Activated B cell treated with CpG ODN at 0.5 μM for 24 hours (primary cell): ENCODE measurements at regions of chr3 and their contacts with region 1.

Region 1: GRCh38 chr3:20185701-20186598 is at the start of gene SGO1:
- DNase-seq: peak; percentile 100
- ATAC-seq: peak; percentile 93
- H3K4me3 Mint-ChIP-seq: no peak within 1 kb of the TSS
- H3K27ac Mint-ChIP-seq: no peak within 1 kb of the TSS
- H3K4me1 Mint-ChIP-seq: no peaks in the 10 kb centered on the region
- H3K27me3 Mint-ChIP-seq: no peaks in the 10 kb centered on the region
- CTCF ChIP-seq: no peak
- total RNA-seq, gene SGO1: 5.9 and 7.2 TPM in 2 replicates

Region 2: GRCh38 chr3:19146685-19147650 is 1039.0 kb before region 1 on chr3:
- CTCF ChIA-PET with region 1: no interaction called
- POLR2A ChIA-PET with region 1: no interaction called
- intact Hi-C with region 1: loop called (anchors 1 kb)
- DNase-seq: peak; percentile 64
- ATAC-seq: peak; percentile 73
- H3K4me3 Mint-ChIP-seq: peak overlapping the region; percentile 95
- H3K27ac Mint-ChIP-seq: peak overlapping the region; percentile 85
- H3K4me1 Mint-ChIP-seq: peaks cover 14% of the 10 kb centered on the region
- H3K27me3 Mint-ChIP-seq: peaks cover 9% of the 10 kb centered on the region
- CTCF ChIP-seq: no peak

Region 3: GRCh38 chr3:19885468-19885867 is 300.5 kb before region 1 on chr3:
- CTCF ChIA-PET with region 1: no interaction called
- POLR2A ChIA-PET with region 1: no interaction called
- intact Hi-C with region 1: loop called (anchors 10 kb)
- DNase-seq: no peak
- ATAC-seq: no peak
- H3K4me3 Mint-ChIP-seq: no peak overlapping the region
- H3K27ac Mint-ChIP-seq: no peak overlapping the region
- H3K4me1 Mint-ChIP-seq: no peaks in the 10 kb centered on the region
- H3K27me3 Mint-ChIP-seq: no peaks in the 10 kb centered on the region
- CTCF ChIP-seq: no peak

Region 4: GRCh38 chr3:20023623-20024405 is 162.1 kb before region 1 on chr3:
- CTCF ChIA-PET with region 1: no interaction called
- POLR2A ChIA-PET with region 1: no interaction called
- intact Hi-C with region 1: no loop called
- DNase-seq: no peak
- ATAC-seq: no peak
- H3K4me3 Mint-ChIP-seq: no peak overlapping the region
- H3K27ac Mint-ChIP-seq: peak overlapping the region; percentile 56
- H3K4me1 Mint-ChIP-seq: peaks cover 7% of the 10 kb centered on the region
- H3K27me3 Mint-ChIP-seq: no peaks in the 10 kb centered on the region
- CTCF ChIP-seq: no peak

Region 5: GRCh38 chr3:20054549-20054987 is 131.4 kb before region 1 on chr3:
- CTCF ChIA-PET with region 1: no interaction called
- POLR2A ChIA-PET with region 1: interaction called, 3 read pairs
- intact Hi-C with region 1: loop called (anchors 1 kb)
- DNase-seq: peak; percentile 22
- ATAC-seq: peak; percentile 92
- H3K4me3 Mint-ChIP-seq: no peak overlapping the region
- H3K27ac Mint-ChIP-seq: no peak overlapping the region
- H3K4me1 Mint-ChIP-seq: peaks cover 33% of the 10 kb centered on the region
- H3K27me3 Mint-ChIP-seq: no peaks in the 10 kb centered on the region
- CTCF ChIP-seq: no peak

Region 6: GRCh38 chr3:20246662-20247061 is 60.7 kb after region 1 on chr3:
- CTCF ChIA-PET with region 1: no interaction called
- POLR2A ChIA-PET with region 1: no interaction called
- intact Hi-C with region 1: loop called (anchors 2 kb)
- DNase-seq: no peak
- ATAC-seq: no peak
- H3K4me3 Mint-ChIP-seq: no peak overlapping the region
- H3K27ac Mint-ChIP-seq: no peak overlapping the region
- H3K4me1 Mint-ChIP-seq: peaks cover 6% of the 10 kb centered on the region
- H3K27me3 Mint-ChIP-seq: no peaks in the 10 kb centered on the region
- CTCF ChIP-seq: no peak

Region 7: GRCh38 chr3:21226086-21226485 is 1040.1 kb after region 1 on chr3:
- CTCF ChIA-PET with region 1: no interaction called
- POLR2A ChIA-PET with region 1: no interaction called
- intact Hi-C with region 1: no loop called
- DNase-seq: no peak
- ATAC-seq: no peak
- H3K4me3 Mint-ChIP-seq: no peak overlapping the region
- H3K27ac Mint-ChIP-seq: no peak overlapping the region
- H3K4me1 Mint-ChIP-seq: no peaks in the 10 kb centered on the region
- H3K27me3 Mint-ChIP-seq: no peaks in the 10 kb centered on the region
- CTCF ChIP-seq: no peak